AG04450 (cell line): ENCODE measurements at regions of chr3 and their contacts with region 1.

Region 1: DNA sequence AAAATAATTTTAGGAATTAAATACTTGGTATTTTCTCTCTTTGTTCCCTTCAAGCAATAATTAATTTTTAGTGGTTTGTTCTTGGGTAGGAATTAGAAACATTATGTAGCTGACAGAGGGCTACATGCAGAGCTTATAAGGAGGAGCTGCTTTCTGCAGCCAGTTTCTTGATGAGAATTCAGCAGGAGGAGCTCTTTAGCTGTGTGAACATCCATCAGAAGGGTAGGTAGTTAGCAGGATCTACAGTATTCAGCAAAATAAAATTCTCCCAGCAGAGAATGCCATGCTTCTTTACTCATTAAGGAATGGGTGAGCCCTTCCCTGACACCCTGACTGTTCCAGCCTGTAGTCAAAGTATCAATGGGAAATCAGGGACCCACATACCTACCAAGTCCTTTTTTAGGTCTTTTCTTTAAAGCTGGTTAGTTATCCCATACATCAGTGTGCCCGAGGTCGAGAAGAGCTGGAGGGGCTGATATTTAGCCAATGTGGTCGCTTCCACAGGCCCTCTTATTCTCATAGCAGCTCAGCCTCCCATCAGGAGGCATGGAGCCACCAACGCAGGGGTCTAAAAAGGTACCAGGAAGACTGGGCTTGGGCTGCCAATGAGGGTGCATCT is 54.0 kb downstream of the KCNAB1 start:
- DNase-seq: peak; percentile 13
- H3K4me3 ChIP-seq: no peak overlapping the region
- H3K27ac ChIP-seq: no peak overlapping the region
- H3K27me3 ChIP-seq: no peaks in the 10 kb centered on the region
- CTCF ChIP-seq: peak; percentile 42

Region 2: DNA sequence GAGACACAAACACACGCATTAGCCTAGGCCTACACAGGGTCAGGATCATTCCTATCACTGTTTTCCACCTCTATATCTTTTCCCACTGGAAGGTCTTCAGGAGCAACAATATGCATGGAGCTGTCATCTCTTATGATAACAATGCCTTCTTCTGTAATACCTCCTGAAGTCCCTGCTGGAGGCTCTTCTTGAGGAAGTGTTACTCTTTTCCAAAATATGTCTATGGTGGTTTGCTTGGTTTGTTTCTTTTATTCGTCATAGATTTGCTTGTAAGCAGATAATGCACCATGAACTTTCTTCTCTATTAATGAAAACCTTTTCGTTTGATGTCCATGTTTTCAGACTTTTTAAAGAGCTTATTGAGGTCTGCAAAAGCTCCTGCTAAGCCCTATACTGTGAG is 194.6 kb before region 1 on chr3:
- CTCF ChIA-PET with region 1: interaction called, 10 read pairs
- POLR2A ChIA-PET with region 1: no interaction called
- DNase-seq: no peak
- H3K4me3 ChIP-seq: no peak overlapping the region
- H3K27ac ChIP-seq: no peak overlapping the region
- H3K27me3 ChIP-seq: no peaks in the 10 kb centered on the region
- CTCF ChIP-seq: no peak

Region 3: DNA sequence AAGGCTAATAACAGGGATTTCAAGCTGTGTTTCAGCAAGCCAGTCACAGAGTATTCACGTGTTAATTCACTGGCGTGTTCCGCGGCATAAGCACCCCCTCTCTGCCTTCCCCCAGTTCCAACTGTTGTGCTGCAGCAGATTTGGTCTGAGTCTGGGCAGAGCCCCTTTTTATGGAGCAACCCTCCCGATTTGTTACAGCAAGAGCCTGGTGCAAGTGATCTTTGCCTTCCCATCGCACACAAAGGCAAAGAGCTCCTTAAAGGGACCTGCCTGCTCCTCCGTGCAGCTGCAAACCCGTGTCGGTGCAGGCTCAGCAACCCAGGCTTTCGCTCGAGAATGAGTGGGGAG is 116.6 kb after region 1 on chr3:
- CTCF ChIA-PET with region 1: no interaction called
- POLR2A ChIA-PET with region 1: no interaction called
- DNase-seq: no peak
- H3K4me3 ChIP-seq: peak overlapping the region; percentile 43
- H3K27ac ChIP-seq: no peak overlapping the region
- H3K27me3 ChIP-seq: peaks cover 43% of the 10 kb centered on the region
- CTCF ChIP-seq: no peak

Region 4: DNA sequence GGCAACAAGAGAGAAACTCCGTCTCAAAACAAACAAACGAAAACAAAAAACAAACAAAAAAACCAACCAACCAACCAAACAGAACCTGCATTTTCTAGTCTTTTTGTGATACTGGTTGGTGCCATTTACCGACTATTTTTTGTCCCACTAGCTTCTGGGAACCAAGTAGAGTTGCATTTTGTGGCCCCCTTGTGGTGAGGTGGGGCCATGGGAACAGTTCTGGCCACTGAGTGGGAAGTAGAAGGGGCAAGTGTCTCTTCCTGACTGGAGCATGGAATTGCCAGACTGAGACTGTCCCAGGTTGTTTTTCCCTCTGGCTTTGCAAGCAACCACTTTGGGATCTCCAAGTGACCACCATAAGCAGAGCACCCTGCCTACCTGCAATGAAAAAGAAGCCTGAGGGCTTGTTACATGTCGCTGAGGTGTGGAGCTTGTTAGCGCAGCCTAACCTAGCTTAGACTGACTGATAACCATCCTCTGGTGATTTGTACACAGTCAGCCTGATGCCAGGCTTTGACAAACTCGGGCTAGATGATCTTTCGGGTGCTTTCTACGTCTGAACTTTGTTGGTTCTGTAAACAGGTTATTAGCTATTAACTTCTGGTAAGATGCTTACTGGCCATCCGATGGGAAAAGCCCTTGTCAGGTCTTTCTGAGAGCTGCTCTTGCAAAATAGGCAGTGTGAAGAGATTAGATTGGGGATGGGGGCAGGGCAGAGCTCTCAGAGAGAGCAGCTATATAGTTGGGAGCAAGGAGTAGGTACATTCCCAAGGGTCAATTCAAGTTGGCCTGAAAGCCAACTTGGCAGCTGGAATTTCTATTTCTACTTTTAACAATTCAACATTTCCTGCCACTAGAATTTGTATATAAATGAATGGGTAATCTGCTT is 208.4 kb after region 1 on chr3:
- CTCF ChIA-PET with region 1: interaction called, 16 read pairs
- POLR2A ChIA-PET with region 1: no interaction called
- DNase-seq: no peak
- H3K4me3 ChIP-seq: no peak overlapping the region
- H3K27ac ChIP-seq: no peak overlapping the region
- H3K27me3 ChIP-seq: peaks cover 11% of the 10 kb centered on the region
- CTCF ChIP-seq: peak; percentile 84